Caco-2 (cell line): ENCODE measurements at regions of chr7 and their contacts with region 1.

Region 1: GRCh38 chr7:13017333-13017853 is 330.0 kb downstream of the ARL4A start:
- DNase-seq: peak; percentile 87 to 91
- H3K4me3 ChIP-seq: peak overlapping the region; percentile 37
- H3K4me3 Mint-ChIP-seq: peak overlapping the region; percentile 78
- H3K27ac Mint-ChIP-seq: peak overlapping the region; percentile 69
- H3K4me1 ChIP-seq: peaks cover 76% of the 10 kb centered on the region
- H3K4me1 Mint-ChIP-seq: peaks cover 36% of the 10 kb centered on the region
- H3K27me3 ChIP-seq: no peaks in the 10 kb centered on the region
- H3K27me3 Mint-ChIP-seq: no peaks in the 10 kb centered on the region
- CTCF ChIP-seq: no peak

Region 2: DNA sequence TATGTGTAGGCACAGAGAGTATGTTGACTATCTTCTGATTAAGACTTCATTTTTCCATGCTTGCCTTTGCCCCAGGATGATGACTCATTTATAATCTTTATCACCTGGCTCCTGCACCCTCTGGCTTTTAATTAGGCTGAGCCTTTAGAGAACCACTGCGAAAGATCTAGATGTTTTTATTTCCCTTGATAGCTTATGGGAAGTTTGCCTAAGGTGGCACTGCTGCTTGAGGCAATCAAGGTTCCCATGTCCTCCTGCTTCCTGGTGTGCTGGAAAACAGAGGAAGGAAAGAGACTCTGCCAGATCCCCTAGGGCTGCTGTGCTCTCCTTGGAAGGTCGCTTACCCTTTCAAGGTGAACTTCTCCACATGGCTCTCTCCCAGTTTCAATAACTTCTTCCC is 215.3 kb before region 1 on chr7:
- CTCF ChIA-PET with region 1: no interaction called
- POLR2A ChIA-PET with region 1: no interaction called
- intact Hi-C with region 1: loop called (anchors 1 kb)
- DNase-seq: peak in 1 of 2 experiments; percentile 10
- H3K4me3 ChIP-seq: no peak overlapping the region
- H3K4me3 Mint-ChIP-seq: peak overlapping the region; percentile 4
- H3K27ac Mint-ChIP-seq: peak overlapping the region; percentile 71
- H3K4me1 ChIP-seq: peaks cover 44% of the 10 kb centered on the region
- H3K4me1 Mint-ChIP-seq: peaks cover 33% of the 10 kb centered on the region
- H3K27me3 ChIP-seq: no peaks in the 10 kb centered on the region
- H3K27me3 Mint-ChIP-seq: no peaks in the 10 kb centered on the region
- CTCF ChIP-seq: no peak

Region 3: GRCh38 chr7:12942609-12943008 is 74.8 kb before region 1 on chr7:
- CTCF ChIA-PET with region 1: interaction called, 7 read pairs
- POLR2A ChIA-PET with region 1: no interaction called
- intact Hi-C with region 1: loop called (anchors 1 kb)
- DNase-seq: peak; percentile 39 to 62
- H3K4me3 ChIP-seq: no peak overlapping the region
- H3K4me3 Mint-ChIP-seq: peak overlapping the region; percentile 21
- H3K27ac Mint-ChIP-seq: no peak overlapping the region
- H3K4me1 ChIP-seq: peaks cover 37% of the 10 kb centered on the region
- H3K4me1 Mint-ChIP-seq: peaks cover 44% of the 10 kb centered on the region
- H3K27me3 ChIP-seq: no peaks in the 10 kb centered on the region
- H3K27me3 Mint-ChIP-seq: no peaks in the 10 kb centered on the region
- CTCF ChIP-seq: no peak

Region 4: GRCh38 chr7:12975412-12975811 is 42.0 kb before region 1 on chr7:
- CTCF ChIA-PET with region 1: no interaction called
- POLR2A ChIA-PET with region 1: no interaction called
- intact Hi-C with region 1: no loop called
- DNase-seq: no peak
- H3K4me3 ChIP-seq: no peak overlapping the region
- H3K4me3 Mint-ChIP-seq: no peak overlapping the region
- H3K27ac Mint-ChIP-seq: no peak overlapping the region
- H3K4me1 ChIP-seq: peaks cover 15% of the 10 kb centered on the region
- H3K4me1 Mint-ChIP-seq: peaks cover 7% of the 10 kb centered on the region
- H3K27me3 ChIP-seq: no peaks in the 10 kb centered on the region
- H3K27me3 Mint-ChIP-seq: no peaks in the 10 kb centered on the region
- CTCF ChIP-seq: no peak

Region 5: GRCh38 chr7:13117103-13117502 is 99.7 kb after region 1 on chr7:
- CTCF ChIA-PET with region 1: interaction called, 4 read pairs
- POLR2A ChIA-PET with region 1: interaction called, 4 read pairs
- intact Hi-C with region 1: loop called (anchors 1 kb)
- DNase-seq: peak in 1 of 2 experiments; percentile 19
- H3K4me3 ChIP-seq: no peak overlapping the region
- H3K4me3 Mint-ChIP-seq: no peak overlapping the region
- H3K27ac Mint-ChIP-seq: peak overlapping the region; percentile 44
- H3K4me1 ChIP-seq: peaks cover 31% of the 10 kb centered on the region
- H3K4me1 Mint-ChIP-seq: peaks cover 27% of the 10 kb centered on the region
- H3K27me3 ChIP-seq: no peaks in the 10 kb centered on the region
- H3K27me3 Mint-ChIP-seq: no peaks in the 10 kb centered on the region
- CTCF ChIP-seq: peak; percentile 15 to 44

Region 6: DNA sequence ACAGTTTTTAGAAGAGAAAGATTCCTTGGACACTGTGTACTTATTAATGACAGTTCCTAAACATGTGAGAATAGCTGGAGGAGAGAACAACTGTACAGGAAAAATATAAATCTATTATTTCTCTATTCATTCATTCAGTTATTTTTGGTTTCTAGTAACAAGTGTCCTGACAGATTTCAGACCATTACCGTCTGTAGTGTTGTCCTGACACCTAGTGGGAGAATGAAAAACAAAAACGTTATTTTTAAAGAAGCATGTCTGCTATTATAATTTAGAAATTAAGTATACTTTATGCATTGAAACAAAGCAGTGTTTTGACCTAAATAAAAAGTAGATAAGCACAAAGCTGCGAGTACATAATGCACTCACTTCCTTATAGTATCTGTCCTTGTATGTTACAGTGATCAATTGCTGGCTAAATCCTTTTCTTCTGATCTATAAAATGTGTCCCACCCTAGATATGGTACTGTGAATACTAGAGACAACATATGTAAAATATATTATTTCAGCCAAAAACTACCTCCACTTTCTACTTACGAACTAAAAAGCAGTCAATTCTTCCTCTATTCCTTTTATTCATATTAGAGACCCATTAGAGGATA is 245.6 kb after region 1 on chr7:
- CTCF ChIA-PET with region 1: no interaction called
- POLR2A ChIA-PET with region 1: no interaction called
- intact Hi-C with region 1: loop called (anchors 10 kb)
- DNase-seq: peak in 1 of 2 experiments; percentile 40
- H3K4me3 ChIP-seq: no peak overlapping the region
- H3K4me3 Mint-ChIP-seq: no peak overlapping the region
- H3K27ac Mint-ChIP-seq: no peak overlapping the region
- H3K4me1 ChIP-seq: no peaks in the 10 kb centered on the region
- H3K4me1 Mint-ChIP-seq: no peaks in the 10 kb centered on the region
- H3K27me3 ChIP-seq: no peaks in the 10 kb centered on the region
- H3K27me3 Mint-ChIP-seq: no peaks in the 10 kb centered on the region
- CTCF ChIP-seq: peak; percentile 43 to 54